A673 (cell line): ENCODE measurements at regions of chr20 and their contacts with region 1.

Region 1: DNA sequence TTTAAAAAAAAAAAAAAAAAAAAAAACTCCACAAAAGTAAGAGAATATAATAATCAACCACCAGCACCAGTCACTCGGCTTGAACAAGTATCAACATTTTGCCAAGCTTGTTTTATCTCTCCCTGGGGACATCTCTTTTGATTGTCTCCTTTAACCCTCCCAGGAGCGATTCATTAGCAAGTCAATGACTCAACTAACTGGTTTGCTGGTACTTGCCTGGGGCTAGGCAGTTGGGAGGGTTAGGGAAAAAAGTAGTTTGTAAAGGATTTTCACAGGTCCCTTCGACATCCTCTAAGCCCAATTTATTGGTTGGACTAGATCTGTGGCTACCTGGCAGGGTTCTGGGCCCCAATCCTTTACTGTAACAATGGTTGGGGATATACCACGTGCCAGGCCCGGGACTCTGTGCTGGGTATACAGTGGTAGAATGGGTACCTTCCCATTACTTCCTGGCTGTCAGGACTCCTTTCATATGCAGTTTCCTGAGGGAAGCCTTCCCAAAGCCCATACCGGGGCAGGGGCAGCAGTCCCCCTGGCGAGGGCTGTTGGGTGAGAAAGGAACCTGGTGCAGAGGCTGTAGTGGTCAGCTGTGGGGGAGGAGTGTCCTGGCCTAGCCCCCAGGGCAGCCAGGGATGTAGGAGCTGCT is 12.2 kb downstream of the TGIF2 start:
- DNase-seq: peak; percentile 97
- H3K4me3 ChIP-seq: no peak overlapping the region
- H3K27ac ChIP-seq: no peak overlapping the region
- H3K4me1 ChIP-seq: peaks cover 23% of the 10 kb centered on the region
- H3K27me3 ChIP-seq: no peaks in the 10 kb centered on the region
- CTCF ChIP-seq: no peak

Region 2: GRCh38 chr20:36355469-36356171 is 230.0 kb before region 1 on chr20:
- CTCF ChIA-PET with region 1: no interaction called
- POLR2A ChIA-PET with region 1: no interaction called
- intact Hi-C with region 1: no loop called
- DNase-seq: peak; percentile 25
- H3K4me3 ChIP-seq: no peak overlapping the region
- H3K27ac ChIP-seq: no peak overlapping the region
- H3K4me1 ChIP-seq: no peaks in the 10 kb centered on the region
- H3K27me3 ChIP-seq: no peaks in the 10 kb centered on the region
- CTCF ChIP-seq: no peak

Region 3: DNA sequence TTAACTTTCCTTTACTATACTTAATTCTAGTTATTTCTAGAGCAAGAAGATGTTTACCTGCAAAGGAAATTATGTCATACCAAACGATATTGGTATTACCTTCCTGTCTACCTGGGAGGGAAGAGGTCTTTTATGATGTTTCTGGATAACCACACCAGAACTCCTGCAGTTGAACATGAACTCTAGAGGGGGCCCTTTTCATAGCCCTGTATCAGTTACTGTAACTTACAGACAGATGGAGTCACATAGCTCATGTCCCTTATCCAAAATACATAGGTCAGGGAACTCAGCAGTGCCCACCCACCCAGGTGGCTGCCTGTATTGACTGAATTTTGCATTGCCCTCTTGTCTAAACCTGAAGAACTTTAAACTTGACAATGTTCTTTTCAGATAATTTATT is 79.3 kb before region 1 on chr20:
- CTCF ChIA-PET with region 1: interaction called, 3 read pairs
- POLR2A ChIA-PET with region 1: no interaction called
- intact Hi-C with region 1: loop called (anchors 5 kb)
- DNase-seq: peak; percentile 39
- H3K4me3 ChIP-seq: no peak overlapping the region
- H3K27ac ChIP-seq: no peak overlapping the region
- H3K4me1 ChIP-seq: no peaks in the 10 kb centered on the region
- H3K27me3 ChIP-seq: no peaks in the 10 kb centered on the region
- CTCF ChIP-seq: peak; percentile 63